ENCODE measurements at regions of chr5 and their contacts with region 1.

Region 1: GRCh38 chr5:171336521-171337209 is 27.6 kb downstream of the TLX3 start:
- DNase-seq: no peak
- H3K4me3 ChIP-seq: peak overlapping the region in 2 of 3 experiments; percentile 24 to 59
- H3K4me3 Mint-ChIP-seq: peak overlapping the region; percentile 59 to 62
- H3K27ac ChIP-seq: no peak overlapping the region
- H3K27ac Mint-ChIP-seq: peak overlapping the region in 1 of 7 donors; percentile 67
- H3K4me1 ChIP-seq: peaks cover 4 to 8% of the 10 kb centered on the region in 2 donors
- H3K4me1 Mint-ChIP-seq: peaks cover 10% of the 10 kb centered on the region
- H3K27me3 ChIP-seq: peaks cover 15 to 44% of the 10 kb centered on the region in 2 donors
- H3K27me3 Mint-ChIP-seq: peaks cover 28 to 77% (median 70%) of the 10 kb centered on the region in 3 donors
- CTCF ChIP-seq: peak; percentile 32

Region 2: GRCh38 chr5:170747851-170748250 is 588.8 kb before region 1 on chr5:
- intact Hi-C with region 1: loop called (anchors 10 kb)
- DNase-seq: no peak
- H3K4me3 ChIP-seq: no peak overlapping the region
- H3K4me3 Mint-ChIP-seq: no peak overlapping the region
- H3K27ac ChIP-seq: no peak overlapping the region
- H3K27ac Mint-ChIP-seq: no peak overlapping the region
- H3K4me1 ChIP-seq: no peaks in the 10 kb centered on the region
- H3K4me1 Mint-ChIP-seq: peaks cover 3% of the 10 kb centered on the region
- H3K27me3 ChIP-seq: peaks cover 4 to 27% of the 10 kb centered on the region in 2 donors
- H3K27me3 Mint-ChIP-seq: peaks cover 34 to 61% (median 43%) of the 10 kb centered on the region in 3 donors
- CTCF ChIP-seq: peak; percentile 11

Region 3: DNA sequence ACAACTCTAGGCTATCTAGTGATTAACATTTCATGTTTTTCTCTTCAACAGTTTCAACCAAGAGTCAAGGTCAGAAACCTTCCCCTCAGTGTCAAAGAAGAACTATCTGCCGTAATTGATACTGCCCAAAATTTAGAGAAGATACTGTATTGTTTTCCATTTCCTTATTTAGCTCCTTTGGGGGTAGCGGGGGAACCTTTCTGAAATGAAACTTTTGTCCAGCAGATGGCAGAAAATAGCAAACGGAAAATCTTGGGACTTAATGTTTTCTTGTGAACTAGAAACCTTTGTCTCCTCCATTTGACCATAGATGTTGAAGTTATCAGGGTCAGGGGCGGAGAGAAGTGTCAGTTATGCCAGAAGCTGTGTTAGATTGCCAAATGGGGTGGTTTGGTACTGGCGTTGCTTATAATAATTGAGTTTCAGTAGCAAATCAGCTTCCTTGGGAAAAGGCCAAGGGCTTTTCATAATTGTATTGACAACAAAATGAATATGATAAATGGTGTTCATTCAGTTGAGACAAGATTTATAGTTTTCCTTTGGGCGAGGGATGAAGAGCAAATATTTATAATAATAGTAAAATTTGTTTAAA is 129.3 kb before region 1 on chr5:
- intact Hi-C with region 1: loop called in 1 of 2 experiments (anchors 10 kb)
- DNase-seq: peak; percentile 1 to 11 (median 7)
- H3K4me3 ChIP-seq: no peak overlapping the region
- H3K4me3 Mint-ChIP-seq: no peak overlapping the region
- H3K27ac ChIP-seq: no peak overlapping the region
- H3K27ac Mint-ChIP-seq: no peak overlapping the region
- H3K4me1 ChIP-seq: no peaks in the 10 kb centered on the region
- H3K4me1 Mint-ChIP-seq: no peaks in the 10 kb centered on the region
- H3K27me3 ChIP-seq: no peaks in the 10 kb centered on the region
- H3K27me3 Mint-ChIP-seq: no peaks in the 10 kb centered on the region
- CTCF ChIP-seq: peak; percentile 60

Region 4: DNA sequence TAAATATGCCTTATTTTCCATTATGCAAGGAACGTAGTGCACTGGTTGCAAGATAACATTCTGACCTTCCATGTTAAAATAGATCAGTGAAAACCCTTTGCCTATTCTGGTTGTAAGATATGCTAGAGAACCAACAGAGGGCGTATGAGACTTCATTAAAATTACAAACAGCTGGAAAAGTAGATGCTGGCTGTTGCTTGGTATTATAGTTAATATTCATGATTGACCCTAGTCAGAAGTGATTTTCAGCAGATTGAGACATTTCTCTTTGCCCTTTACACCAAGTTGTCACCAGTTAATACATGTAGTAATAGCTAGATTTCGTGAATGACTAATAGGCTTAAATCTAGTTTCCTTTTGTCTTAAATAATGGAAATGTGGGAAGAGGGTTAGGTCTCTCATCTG is 68.9 kb after region 1 on chr5:
- intact Hi-C with region 1: no loop called
- DNase-seq: no peak
- H3K4me3 ChIP-seq: no peak overlapping the region
- H3K4me3 Mint-ChIP-seq: no peak overlapping the region
- H3K27ac ChIP-seq: no peak overlapping the region
- H3K27ac Mint-ChIP-seq: no peak overlapping the region
- H3K4me1 ChIP-seq: peaks cover 0 to under 1% of the 10 kb centered on the region in 2 donors
- H3K4me1 Mint-ChIP-seq: peaks cover 3% of the 10 kb centered on the region
- H3K27me3 ChIP-seq: no peaks in the 10 kb centered on the region
- H3K27me3 Mint-ChIP-seq: no peaks in the 10 kb centered on the region
- CTCF ChIP-seq: peak; percentile 14